Naive thymus-derived CD4-positive, alpha-beta T cell (primary cell): ENCODE measurements at regions of chr10 and their contacts with region 1.

Region 1: GRCh38 chr10:104209575-104210198 is 22.5 kb downstream of the CFAP43 start:
- DNase-seq: peak in 7 of 9 donors; percentile 20 to 52 (median 47)
- ATAC-seq: peak; percentile 70
- H3K4me3 ChIP-seq: no peak overlapping the region
- H3K4me3 Mint-ChIP-seq: no peak overlapping the region
- H3K27ac ChIP-seq: no peak overlapping the region
- H3K27ac Mint-ChIP-seq: no peak overlapping the region
- H3K4me1 ChIP-seq: no peaks in the 10 kb centered on the region
- H3K4me1 Mint-ChIP-seq: peaks cover 0 to 3% (median 0%) of the 10 kb centered on the region in 7 donors
- H3K27me3 ChIP-seq: no peaks in the 10 kb centered on the region
- H3K27me3 Mint-ChIP-seq: peaks cover 0 to 50% (median 12%) of the 10 kb centered on the region in 5 donors

Region 2: DNA sequence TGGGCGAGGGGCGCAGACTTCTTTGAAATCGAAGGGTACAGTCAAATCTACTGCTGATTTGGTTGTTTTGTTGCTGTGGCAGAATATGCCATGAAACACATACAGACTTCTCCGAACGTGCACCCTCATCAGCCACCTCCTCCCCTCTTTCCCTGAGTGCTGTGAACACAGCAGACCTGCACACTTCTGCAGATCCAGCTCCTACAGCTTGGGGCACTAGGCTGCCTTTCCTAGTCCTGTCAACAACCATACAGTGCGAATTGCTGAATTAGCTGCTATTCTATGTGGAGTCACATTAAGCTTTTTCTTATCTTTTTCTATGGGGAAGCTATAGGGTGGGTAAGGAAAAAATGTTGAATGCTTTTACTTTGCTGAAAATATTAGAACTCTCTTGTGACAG is 181.5 kb before region 1 on chr10:
- CTCF ChIA-PET with region 1: interaction called, 4 read pairs
- POLR2A ChIA-PET with region 1: no interaction called
- intact Hi-C with region 1: loop called in 1 of 2 experiments (anchors 1 kb)
- DNase-seq: peak in 5 of 9 donors; percentile 11 to 29 (median 15)
- ATAC-seq: peak; percentile 75
- H3K4me3 ChIP-seq: no peak overlapping the region
- H3K4me3 Mint-ChIP-seq: no peak overlapping the region
- H3K27ac ChIP-seq: no peak overlapping the region
- H3K27ac Mint-ChIP-seq: peak overlapping the region in 4 of 9 donors; percentile 59 to 78 (median 69)
- H3K4me1 ChIP-seq: no peaks in the 10 kb centered on the region
- H3K4me1 Mint-ChIP-seq: peaks cover 0 to 6% (median 0%) of the 10 kb centered on the region in 7 donors
- H3K27me3 ChIP-seq: no peaks in the 10 kb centered on the region
- H3K27me3 Mint-ChIP-seq: no peaks in the 10 kb centered on the region

Region 3: GRCh38 chr10:104045151-104046089 is 164.3 kb before region 1 on chr10:
- CTCF ChIA-PET with region 1: no interaction called
- POLR2A ChIA-PET with region 1: no interaction called
- intact Hi-C with region 1: loop called in 1 of 2 experiments (anchors 1 kb)
- DNase-seq: no peak
- ATAC-seq: no peak
- H3K4me3 ChIP-seq: no peak overlapping the region
- H3K4me3 Mint-ChIP-seq: no peak overlapping the region
- H3K27ac ChIP-seq: no peak overlapping the region
- H3K27ac Mint-ChIP-seq: no peak overlapping the region
- H3K4me1 ChIP-seq: no peaks in the 10 kb centered on the region
- H3K4me1 Mint-ChIP-seq: peaks cover 0 to 3% (median 0%) of the 10 kb centered on the region in 7 donors
- H3K27me3 ChIP-seq: no peaks in the 10 kb centered on the region
- H3K27me3 Mint-ChIP-seq: no peaks in the 10 kb centered on the region

Region 4: GRCh38 chr10:104144931-104145330 is 64.8 kb before region 1 on chr10:
- CTCF ChIA-PET with region 1: no interaction called
- POLR2A ChIA-PET with region 1: no interaction called
- intact Hi-C with region 1: loop called in 1 of 2 experiments (anchors 5 kb)
- DNase-seq: no peak
- ATAC-seq: peak; percentile 22
- H3K4me3 ChIP-seq: no peak overlapping the region
- H3K4me3 Mint-ChIP-seq: no peak overlapping the region
- H3K27ac ChIP-seq: no peak overlapping the region
- H3K27ac Mint-ChIP-seq: no peak overlapping the region
- H3K4me1 ChIP-seq: no peaks in the 10 kb centered on the region
- H3K4me1 Mint-ChIP-seq: no peaks in the 10 kb centered on the region
- H3K27me3 ChIP-seq: peaks cover 0 to 3% of the 10 kb centered on the region in 2 donors
- H3K27me3 Mint-ChIP-seq: peaks cover 5 to 63% (median 14%) of the 10 kb centered on the region in 5 donors